Left colon (tissue), 2 donors: ENCODE measurements at regions of chr11 and their contacts with region 1.

Region 1: DNA sequence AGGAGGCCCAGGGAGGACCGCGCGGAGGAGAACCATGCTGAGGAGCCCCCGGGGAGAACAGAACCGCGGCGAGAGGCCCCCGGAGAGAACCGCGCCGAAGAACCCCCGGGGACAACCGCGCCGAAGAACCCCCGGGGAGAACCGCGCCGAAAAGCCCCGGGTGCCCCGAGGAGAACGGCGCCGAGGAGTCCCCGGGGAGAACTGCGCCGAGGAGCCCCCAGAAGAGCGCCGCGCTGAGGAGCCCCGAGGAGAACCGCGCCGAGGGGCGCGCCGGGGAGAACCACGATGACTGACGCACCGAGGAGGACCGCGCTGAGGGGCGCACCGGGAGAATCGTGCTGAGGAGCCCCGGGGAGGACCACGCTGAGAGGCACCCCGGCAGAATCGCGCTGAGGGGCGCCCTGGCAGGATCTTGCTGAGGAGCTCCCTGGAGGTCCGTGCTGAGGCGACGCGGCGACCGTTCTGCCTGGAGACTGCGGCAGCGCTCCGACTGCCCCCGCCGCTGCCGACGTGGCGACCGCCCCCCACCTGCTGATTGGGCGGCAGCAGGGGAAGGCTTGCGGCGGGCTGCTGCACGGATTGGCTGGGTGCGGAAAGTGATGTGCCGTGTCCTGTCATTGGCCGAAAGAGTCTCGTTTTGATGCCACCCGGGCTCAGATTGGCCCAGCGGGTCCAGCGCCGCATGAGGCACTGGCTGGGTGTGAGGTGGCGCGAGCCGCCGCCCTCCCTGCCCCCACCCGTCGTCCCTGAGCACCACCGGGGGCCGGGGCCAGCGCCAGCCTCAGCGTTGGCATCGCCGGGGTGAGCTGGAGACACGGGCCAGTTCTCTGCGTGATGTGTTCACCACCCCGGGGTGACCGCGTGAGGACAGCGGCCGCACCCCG is at the start of gene KCNQ1OT1:
- DNase-seq: peak; percentile 86 to 92
- ATAC-seq: peak; percentile 86
- total RNA-seq, gene KCNQ1OT1: 1.1 to 1.9 TPM

Region 2: GRCh38 chr11:2592559-2593392 is 107.0 kb before region 1 on chr11:
- intact Hi-C with region 1: no loop called
- DNase-seq: peak in 1 of 2 donors; percentile 3
- ATAC-seq: no peak

Region 3: GRCh38 chr11:2885676-2886081 is 185.9 kb after region 1 on chr11 and contains the start of gene CDKN1C:
- intact Hi-C with region 1: loop called in 1 of 2 experiments (anchors 10 kb)
- DNase-seq: peak; percentile 86 to 88
- ATAC-seq: peak; percentile 74
- total RNA-seq, gene CDKN1C: 5.8 to 10.6 TPM